Thyroid gland (tissue), 4 donors: ENCODE measurements at regions of chr20 and their contacts with region 1.

Region 1: DNA sequence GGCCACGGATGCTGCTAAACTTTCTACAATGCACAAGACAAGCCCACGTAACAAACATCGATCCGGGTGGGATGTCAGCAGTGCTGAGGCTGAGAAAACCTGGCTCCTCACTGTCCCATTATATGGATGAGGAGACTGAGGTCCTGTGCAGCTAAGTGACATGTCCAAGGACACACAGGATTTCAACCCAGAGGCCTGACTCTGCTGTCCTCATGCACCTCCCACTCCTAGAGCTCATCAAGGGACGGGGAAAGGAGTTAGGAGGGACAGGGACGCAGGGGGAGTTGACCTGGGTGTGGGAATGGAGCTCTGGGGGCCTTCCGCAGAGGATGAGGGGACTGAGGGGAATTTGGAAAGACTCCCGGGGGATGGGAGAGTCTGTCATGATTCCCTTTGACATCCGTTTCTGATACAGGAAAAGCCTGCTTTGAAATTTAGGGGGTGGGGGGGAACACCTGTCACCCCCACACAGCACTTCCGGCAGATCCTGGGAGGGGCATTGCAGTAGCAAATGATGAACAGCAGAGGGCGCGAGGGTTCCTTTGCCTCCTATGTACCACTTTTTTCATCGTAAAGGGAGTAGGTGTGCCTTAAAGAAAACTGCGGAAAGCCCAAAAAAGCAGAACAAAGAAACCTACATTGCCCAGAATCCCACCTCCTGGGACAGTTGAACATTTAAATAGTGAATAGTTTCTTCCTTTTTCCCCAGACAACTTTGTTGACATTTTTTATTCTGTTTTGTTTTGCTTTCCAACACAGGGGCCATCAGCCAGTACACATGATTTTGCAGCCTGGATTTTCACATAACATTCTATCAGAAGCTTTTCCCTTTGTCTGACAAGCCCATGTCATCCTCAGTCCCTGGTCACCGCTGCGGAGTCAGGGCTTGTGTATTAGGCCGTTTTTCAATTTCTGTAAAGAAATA is 48.6 kb downstream of the SLC2A10 start:
- DNase-seq: peak; percentile 52 to 58
- H3K4me3 ChIP-seq: no peak overlapping the region
- H3K27ac ChIP-seq: no peak overlapping the region
- H3K4me1 ChIP-seq: peaks cover 0 to 5% of the 10 kb centered on the region in 2 donors
- H3K27me3 ChIP-seq: no peaks in the 10 kb centered on the region
- CTCF ChIP-seq: peak; percentile 86 to 99 (median 92)
- POLR2A ChIP-seq: no peak

Region 2: DNA sequence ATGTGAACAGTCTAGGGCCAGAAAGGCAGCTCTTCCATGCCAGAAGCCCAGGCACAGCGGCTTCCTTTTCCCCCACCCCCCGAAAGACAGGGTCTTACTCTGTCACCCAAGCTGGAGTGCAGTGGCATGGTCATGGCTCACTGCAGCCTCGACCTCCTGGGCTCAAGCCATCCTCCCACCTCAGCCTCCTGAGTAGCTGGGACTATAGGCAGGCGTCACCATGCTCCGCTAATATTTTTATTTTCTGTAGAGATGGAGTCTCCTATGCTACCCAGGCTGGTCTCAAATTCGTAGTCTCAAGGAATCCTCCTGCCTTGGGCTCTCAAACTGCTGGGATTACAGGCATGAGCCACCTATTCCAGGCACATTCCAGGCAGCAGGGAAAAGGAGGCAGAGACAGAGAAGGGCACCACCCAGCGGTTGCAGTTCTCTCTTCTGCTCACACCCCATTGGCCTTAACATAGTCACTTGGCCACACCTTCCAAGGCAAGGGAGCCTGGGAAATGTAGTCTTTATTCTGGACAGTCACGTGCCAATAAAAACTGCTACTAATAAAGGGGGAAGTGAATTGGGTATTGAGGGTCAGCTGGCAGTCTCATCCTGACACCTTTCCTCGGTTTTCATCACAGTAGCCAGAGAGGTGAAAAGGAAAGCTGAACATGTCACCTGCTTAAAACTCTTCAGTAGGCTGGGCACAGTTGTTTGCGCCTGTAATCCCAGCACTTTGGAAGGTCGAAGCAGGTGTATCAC is 392.6 kb after region 1 on chr20:
- intact Hi-C with region 1: loop called (anchors 10 kb)
- DNase-seq: peak; percentile 64 to 70
- H3K4me3 ChIP-seq: no peak overlapping the region
- H3K27ac ChIP-seq: no peak overlapping the region
- H3K4me1 ChIP-seq: no peaks in the 10 kb centered on the region
- H3K27me3 ChIP-seq: no peaks in the 10 kb centered on the region
- CTCF ChIP-seq: peak in 5 of 6 experiments; percentile 34 to 66 (median 53)
- POLR2A ChIP-seq: no peak